Activated naive CD4-positive, alpha-beta T cell treated with anti-CD3 and anti-CD28 coated beads for 36 hours (primary cell): ENCODE measurements at regions of chr11 and their contacts with region 1.

Region 1: DNA sequence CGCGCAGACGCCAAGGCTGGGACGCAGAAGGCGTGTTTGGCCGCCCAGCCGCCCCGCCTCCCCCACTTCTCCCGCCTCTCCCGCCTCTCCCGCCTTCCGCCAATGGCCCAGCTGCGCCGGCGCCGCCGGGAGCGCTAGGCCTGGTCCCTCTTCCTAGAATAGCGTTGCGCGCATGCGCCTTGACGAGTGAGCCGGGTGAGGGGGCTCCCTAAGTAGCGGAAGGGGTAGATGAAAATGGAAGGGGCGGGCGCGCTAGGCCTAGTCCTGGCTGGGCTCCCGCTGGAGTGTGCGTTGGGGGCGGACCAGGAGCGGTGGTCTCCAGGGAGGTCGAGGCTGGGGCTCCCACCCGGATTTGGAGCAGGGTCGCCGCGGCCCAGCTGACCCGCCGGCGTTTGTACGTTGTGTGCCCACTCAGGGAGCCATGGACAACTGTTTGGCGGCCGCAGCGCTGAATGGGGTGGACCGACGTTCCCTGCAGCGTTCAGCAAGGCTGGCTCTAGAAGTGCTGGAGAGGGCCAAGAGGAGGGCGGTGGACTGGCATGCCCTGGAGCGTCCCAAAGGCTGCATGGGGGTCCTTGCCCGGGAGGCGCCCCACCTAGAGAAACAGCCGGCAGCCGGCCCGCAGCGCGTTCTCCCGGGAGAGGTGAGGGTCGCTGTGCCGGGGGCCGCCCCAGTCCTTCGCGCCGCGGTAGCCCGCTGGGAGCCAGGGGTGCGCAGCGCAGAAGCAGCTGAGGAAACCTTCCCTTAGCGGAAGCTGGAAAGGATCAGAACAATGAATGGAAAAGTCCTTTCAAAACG is at the start of gene AKIP1:
- DNase-seq: peak; percentile 91
- H3K4me3 Mint-ChIP-seq: peak within 1 kb of the TSS; percentile 92
- H3K27ac Mint-ChIP-seq: peak within 1 kb of the TSS; percentile 86
- H3K4me1 Mint-ChIP-seq: peaks cover 44% of the 10 kb centered on the region
- H3K27me3 Mint-ChIP-seq: no peaks in the 10 kb centered on the region
- total RNA-seq, gene AKIP1: 41.5 to 43.9 TPM

Region 2: GRCh38 chr11:8688414-8689362 is 222.5 kb before region 1 on chr11:
- CTCF ChIA-PET with region 1: interaction called, 4 read pairs
- intact Hi-C with region 1: loop called (anchors 1 kb)
- DNase-seq: peak; percentile 90
- H3K4me3 Mint-ChIP-seq: peak overlapping the region; percentile 97
- H3K27ac Mint-ChIP-seq: peak overlapping the region; percentile 96
- H3K4me1 Mint-ChIP-seq: peaks cover 53% of the 10 kb centered on the region
- H3K27me3 Mint-ChIP-seq: no peaks in the 10 kb centered on the region

Region 3: DNA sequence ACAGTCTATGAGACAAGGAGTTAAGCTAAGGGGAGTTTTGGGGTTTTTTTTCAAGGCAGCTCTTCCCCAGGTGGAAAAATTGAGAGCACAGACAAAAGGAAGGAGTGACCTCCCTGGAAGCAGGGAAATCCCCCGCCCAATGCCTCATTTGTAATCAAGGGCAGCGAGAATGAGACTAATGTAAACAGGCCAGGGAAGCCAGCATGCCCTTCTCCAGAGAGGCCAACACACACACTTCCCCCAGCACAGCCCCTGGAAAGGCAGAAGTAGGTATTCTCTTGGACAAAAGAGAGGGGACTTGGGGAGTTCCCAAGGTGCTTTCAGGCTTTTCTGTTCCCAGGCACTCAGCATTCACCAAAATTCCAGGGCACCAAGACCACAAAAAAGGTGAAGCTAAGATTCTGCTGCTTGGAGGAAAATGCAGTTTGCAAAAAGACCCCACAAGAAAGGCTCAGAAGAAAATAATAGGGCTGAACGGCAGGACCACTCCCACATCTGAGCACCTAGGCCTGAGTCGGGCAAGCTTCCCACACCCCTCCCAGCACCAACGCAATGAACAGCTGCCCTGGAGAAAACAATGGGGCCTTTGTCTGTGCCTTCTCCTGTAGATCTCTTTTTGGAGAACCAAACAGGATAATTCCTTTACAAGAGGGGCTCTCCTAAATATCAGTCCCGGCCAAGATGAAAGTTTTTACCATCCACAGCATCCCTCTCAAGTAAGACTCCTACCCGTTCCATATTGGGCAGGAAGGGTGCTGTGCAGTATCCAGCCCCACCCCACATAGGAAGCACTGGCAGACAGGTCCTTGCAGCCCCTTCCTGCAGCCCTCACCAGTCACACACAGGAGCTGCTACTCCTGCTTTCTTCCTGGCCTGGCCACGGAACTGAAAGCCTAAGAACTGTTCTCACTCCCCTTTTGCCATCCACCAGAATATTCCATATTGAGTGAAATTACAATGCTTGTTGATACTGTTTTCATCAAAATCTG is 71.0 kb before region 1 on chr11:
- CTCF ChIA-PET with region 1: no interaction called
- intact Hi-C with region 1: loop called (anchors 2 kb)
- DNase-seq: peak; percentile 61
- H3K4me3 Mint-ChIP-seq: no peak overlapping the region
- H3K27ac Mint-ChIP-seq: no peak overlapping the region
- H3K4me1 Mint-ChIP-seq: peaks cover 23% of the 10 kb centered on the region
- H3K27me3 Mint-ChIP-seq: peaks cover 9% of the 10 kb centered on the region

Region 4: GRCh38 chr11:9060700-9061111 is 149.5 kb after region 1 on chr11:
- CTCF ChIA-PET with region 1: no interaction called
- intact Hi-C with region 1: loop called (anchors 2 kb)
- DNase-seq: peak; percentile 89
- H3K4me3 Mint-ChIP-seq: no peak overlapping the region
- H3K27ac Mint-ChIP-seq: no peak overlapping the region
- H3K4me1 Mint-ChIP-seq: peaks cover 12% of the 10 kb centered on the region
- H3K27me3 Mint-ChIP-seq: peaks cover 13% of the 10 kb centered on the region

Region 5: GRCh38 chr11:9506489-9507276 is 595.5 kb after region 1 on chr11:
- CTCF ChIA-PET with region 1: no interaction called
- intact Hi-C with region 1: loop called (anchors 2 kb)
- DNase-seq: peak; percentile 90
- H3K4me3 Mint-ChIP-seq: no peak overlapping the region
- H3K27ac Mint-ChIP-seq: no peak overlapping the region
- H3K4me1 Mint-ChIP-seq: no peaks in the 10 kb centered on the region
- H3K27me3 Mint-ChIP-seq: no peaks in the 10 kb centered on the region